ENCODE measurements at regions of chr19 and their contacts with region 1.

Region 1: GRCh38 chr19:17245244-17245984 is at the start of gene NR2F6:
- DNase-seq: no peak
- H3K4me3 Mint-ChIP-seq: peak within 1 kb of the TSS; percentile 89
- H3K27ac Mint-ChIP-seq: peak within 1 kb of the TSS; percentile 93
- H3K4me1 Mint-ChIP-seq: peaks cover 38% of the 10 kb centered on the region
- H3K27me3 Mint-ChIP-seq: no peaks in the 10 kb centered on the region
- CTCF ChIP-seq: no peak
- total RNA-seq, gene NR2F6: 32.8 and 36.3 TPM in 2 replicates

Region 2: DNA sequence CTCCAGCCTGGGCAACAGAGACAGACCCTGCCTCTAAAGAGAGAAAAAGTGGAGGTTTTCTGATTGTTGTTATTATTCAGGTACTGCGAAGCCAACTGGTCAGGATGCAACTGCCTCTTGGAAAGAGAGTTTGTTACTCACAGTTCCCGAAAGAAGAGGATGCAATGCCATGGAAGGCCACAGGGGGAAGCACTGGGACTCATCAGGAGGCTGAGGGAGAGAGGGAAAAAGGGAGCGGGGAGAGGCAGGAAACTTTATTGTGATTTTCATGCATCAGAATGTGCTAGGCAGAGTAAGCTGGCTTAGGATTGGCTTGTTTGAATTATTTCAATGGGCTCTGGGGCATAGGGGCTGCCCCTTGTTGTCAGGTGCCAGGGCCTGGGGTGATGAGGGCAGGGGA is 142.2 kb before region 1 on chr19:
- CTCF ChIA-PET with region 1: no interaction called
- POLR2A ChIA-PET with region 1: no interaction called
- intact Hi-C with region 1: no loop called
- DNase-seq: peak; percentile 60
- H3K4me3 Mint-ChIP-seq: no peak overlapping the region
- H3K27ac Mint-ChIP-seq: no peak overlapping the region
- H3K4me1 Mint-ChIP-seq: peaks cover 9% of the 10 kb centered on the region
- H3K27me3 Mint-ChIP-seq: no peaks in the 10 kb centered on the region
- CTCF ChIP-seq: peak; percentile 44

Region 3: GRCh38 chr19:17135001-17135853 is 110.2 kb before region 1 on chr19:
- CTCF ChIA-PET with region 1: no interaction called
- POLR2A ChIA-PET with region 1: no interaction called
- intact Hi-C with region 1: no loop called
- DNase-seq: peak; percentile 88
- H3K4me3 Mint-ChIP-seq: peak overlapping the region; percentile 48
- H3K27ac Mint-ChIP-seq: peak overlapping the region; percentile 81
- H3K4me1 Mint-ChIP-seq: peaks cover 13% of the 10 kb centered on the region
- H3K27me3 Mint-ChIP-seq: no peaks in the 10 kb centered on the region
- CTCF ChIP-seq: no peak

Region 4: DNA sequence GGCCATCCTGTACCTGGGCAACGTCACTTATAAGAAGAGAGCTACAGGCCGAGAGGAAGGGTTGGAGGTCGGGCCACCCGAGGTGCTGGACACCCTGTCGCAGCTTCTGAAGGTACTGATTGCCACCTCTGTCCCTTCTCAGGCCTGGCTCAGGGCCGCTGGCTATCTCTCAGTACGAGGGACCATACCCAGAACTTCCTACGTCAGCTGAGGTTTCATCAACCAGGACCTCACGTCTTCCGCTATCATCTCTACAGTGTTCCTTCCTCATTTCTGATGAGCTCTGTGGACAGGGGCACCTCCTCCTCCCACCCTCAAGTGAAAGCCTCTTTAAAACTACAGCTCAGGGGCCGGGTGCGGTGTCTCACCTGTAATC is 88.5 kb before region 1 on chr19:
- CTCF ChIA-PET with region 1: no interaction called
- POLR2A ChIA-PET with region 1: no interaction called
- intact Hi-C with region 1: no loop called
- DNase-seq: no peak
- H3K4me3 Mint-ChIP-seq: no peak overlapping the region
- H3K27ac Mint-ChIP-seq: no peak overlapping the region
- H3K4me1 Mint-ChIP-seq: peaks cover 5% of the 10 kb centered on the region
- H3K27me3 Mint-ChIP-seq: no peaks in the 10 kb centered on the region
- CTCF ChIP-seq: no peak

Region 5: GRCh38 chr19:17201913-17202648 is 43.3 kb before region 1 on chr19:
- CTCF ChIA-PET with region 1: no interaction called
- POLR2A ChIA-PET with region 1: no interaction called
- intact Hi-C with region 1: no loop called
- DNase-seq: peak; percentile 34
- H3K4me3 Mint-ChIP-seq: no peak overlapping the region
- H3K27ac Mint-ChIP-seq: no peak overlapping the region
- H3K4me1 Mint-ChIP-seq: no peaks in the 10 kb centered on the region
- H3K27me3 Mint-ChIP-seq: no peaks in the 10 kb centered on the region
- CTCF ChIP-seq: no peak

Region 6: DNA sequence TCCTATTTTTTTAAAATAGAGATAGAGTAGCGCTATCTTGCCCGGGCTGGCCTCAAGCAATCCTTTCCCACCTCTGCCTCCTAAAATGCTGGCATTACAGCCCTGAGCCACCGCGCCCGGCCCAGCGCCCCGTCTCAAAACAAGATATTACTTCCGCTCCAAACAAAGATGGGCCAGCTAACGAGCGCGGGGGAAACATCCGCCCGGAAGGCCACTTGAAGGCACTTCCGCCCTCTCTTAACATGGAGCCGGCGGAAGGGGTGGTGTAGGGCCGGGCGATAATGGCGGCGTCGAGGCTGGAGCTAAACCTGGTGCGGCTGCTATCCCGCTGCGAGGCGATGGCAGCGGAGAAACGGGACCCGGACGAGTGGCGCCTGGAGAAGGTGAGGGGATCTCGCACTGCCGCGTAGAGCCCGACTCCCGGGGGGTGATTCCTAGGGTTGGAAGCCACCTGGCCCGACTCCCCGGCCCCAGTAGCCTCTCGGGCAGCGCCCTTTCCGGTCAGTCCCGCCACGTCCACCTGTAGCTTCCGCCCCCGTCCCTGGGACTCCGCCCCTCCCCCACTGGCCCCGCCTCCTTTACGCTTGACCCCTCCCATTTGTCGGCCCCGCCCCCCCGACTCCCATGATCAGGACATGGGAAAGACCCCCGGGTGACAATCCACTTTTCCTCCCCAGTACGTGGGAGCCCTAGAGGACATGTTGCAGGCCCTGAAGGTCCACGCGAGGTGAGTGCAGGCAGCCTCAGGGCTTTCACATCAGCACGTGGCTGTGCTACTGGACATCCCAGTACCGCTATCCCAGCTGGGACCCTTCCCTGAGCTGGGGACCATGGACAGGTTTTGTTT is 30.1 kb before region 1 on chr19 and contains the start of gene USE1:
- CTCF ChIA-PET with region 1: no interaction called
- POLR2A ChIA-PET with region 1: interaction called, 20 read pairs
- intact Hi-C with region 1: no loop called
- DNase-seq: peak; percentile 95
- H3K4me3 Mint-ChIP-seq: peak within 1 kb of the TSS; percentile 80
- H3K27ac Mint-ChIP-seq: peak within 1 kb of the TSS; percentile 98
- H3K4me1 Mint-ChIP-seq: no peaks in the 10 kb centered on the region
- H3K27me3 Mint-ChIP-seq: no peaks in the 10 kb centered on the region
- CTCF ChIP-seq: no peak
- total RNA-seq, gene USE1: 29.9 and 47.9 TPM in 2 replicates

Region 7: DNA sequence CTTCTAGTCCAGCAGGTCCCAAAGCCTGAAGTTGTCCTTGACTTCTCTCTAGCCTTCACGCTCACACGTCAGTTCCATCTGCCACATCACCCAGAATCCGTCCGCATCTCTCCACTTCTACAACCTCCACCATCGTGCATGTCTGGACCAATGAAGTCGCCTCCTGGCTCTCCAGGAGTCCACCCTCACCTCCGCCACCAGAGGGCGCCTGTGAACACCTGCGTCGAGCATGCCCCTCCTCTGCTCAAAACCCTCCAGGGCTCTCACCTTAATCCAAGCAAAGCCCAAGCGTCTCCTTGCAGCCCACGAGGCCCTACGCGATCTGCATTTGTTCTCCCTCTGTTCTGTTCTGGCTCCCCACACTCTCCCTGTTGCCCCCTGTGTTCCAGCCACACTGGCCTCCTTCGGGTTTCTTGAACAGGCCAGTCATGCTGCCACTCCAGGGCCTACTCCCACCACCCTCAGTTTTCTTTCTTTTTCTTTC is 15.5 kb after region 1 on chr19:
- CTCF ChIA-PET with region 1: interaction called, 56 read pairs
- POLR2A ChIA-PET with region 1: interaction called, 7 read pairs
- intact Hi-C with region 1: no loop called
- DNase-seq: peak; percentile 93
- H3K4me3 Mint-ChIP-seq: no peak overlapping the region
- H3K27ac Mint-ChIP-seq: no peak overlapping the region
- H3K4me1 Mint-ChIP-seq: peaks cover 6% of the 10 kb centered on the region
- H3K27me3 Mint-ChIP-seq: no peaks in the 10 kb centered on the region
- CTCF ChIP-seq: peak; percentile 91

Region 8: DNA sequence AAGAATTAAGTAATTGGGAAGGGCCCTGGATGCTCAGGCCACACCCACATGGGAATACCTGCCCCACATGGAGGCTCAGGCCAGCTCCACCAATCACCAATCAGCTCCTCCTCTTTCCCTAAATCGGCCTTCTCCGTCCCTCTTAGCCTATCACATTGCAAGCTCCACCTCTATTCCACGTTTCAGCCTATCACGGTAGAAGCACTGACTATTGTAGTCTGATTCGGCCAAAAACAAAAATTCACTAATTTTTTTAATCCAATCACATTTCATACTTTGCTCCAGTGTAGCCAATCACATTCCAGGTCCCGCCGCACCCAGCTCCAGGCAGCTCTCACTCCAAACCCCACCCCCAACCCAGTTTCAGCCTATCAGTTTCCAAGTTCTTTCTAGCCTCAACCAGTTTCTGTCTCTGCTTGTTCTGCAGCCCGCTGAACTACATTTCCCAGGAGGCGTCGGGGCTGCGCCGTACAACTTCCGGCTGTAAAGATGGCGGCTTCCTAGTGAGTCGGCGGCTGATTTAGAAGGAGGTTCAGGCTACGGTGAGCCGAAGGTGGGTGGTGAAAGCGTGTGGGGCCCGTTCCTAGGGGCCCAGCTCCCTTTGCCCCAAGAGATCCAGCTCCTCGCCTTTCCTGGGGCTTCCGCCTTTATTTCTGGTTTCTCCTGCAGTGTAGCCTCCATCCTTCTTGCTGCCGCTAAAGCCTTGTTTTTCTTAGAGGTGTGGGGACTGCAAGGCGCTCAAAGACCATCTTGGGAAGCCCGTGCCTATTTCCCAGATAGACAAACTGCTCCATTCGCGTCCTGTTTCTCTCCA is 21.8 kb after region 1 on chr19 and contains the start of gene BABAM1:
- CTCF ChIA-PET with region 1: interaction called, 5 read pairs
- POLR2A ChIA-PET with region 1: interaction called, 21 read pairs
- intact Hi-C with region 1: no loop called
- DNase-seq: peak; percentile 99
- H3K4me3 Mint-ChIP-seq: peak within 1 kb of the TSS; percentile 84
- H3K27ac Mint-ChIP-seq: peak within 1 kb of the TSS; percentile 93
- H3K4me1 Mint-ChIP-seq: peaks cover 6% of the 10 kb centered on the region
- H3K27me3 Mint-ChIP-seq: no peaks in the 10 kb centered on the region
- CTCF ChIP-seq: no peak
- total RNA-seq, gene BABAM1: 96.1 and 104 TPM in 2 replicates